Activated CD4-positive, alpha-beta T cell treated with anti-CD3 and anti-CD28 coated beads for 36 hours (primary cell): ENCODE measurements at regions of chr5 and their contacts with region 1.

Region 1: DNA sequence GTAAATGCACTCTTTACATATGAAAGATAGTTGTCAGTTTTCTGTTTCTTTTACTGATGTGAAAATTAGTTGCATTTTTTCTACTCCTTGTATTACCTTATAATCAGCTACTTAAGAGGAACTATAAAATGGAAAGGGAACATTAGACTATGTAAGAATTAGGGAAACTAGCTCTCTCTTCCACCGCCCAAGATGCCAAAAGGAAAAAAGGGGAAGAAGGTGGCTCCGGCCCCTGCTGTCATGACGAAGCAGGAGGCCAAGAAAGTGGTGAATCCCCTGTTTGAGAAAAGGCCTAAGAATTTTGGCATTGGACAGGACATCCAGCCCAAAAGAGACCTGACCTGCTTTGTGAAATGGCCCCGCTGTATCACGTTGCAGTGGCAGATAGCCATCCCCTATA is 15.2 kb upstream of the HOMER1 start:
- DNase-seq: no peak
- ATAC-seq: no peak
- H3K4me3 Mint-ChIP-seq: no peak overlapping the region
- H3K27ac Mint-ChIP-seq: no peak overlapping the region
- H3K4me1 Mint-ChIP-seq: peaks cover 3% of the 10 kb centered on the region
- H3K27me3 Mint-ChIP-seq: peaks cover 5% of the 10 kb centered on the region

Region 2: GRCh38 chr5:79499640-79500273 is 29.4 kb before region 1 on chr5:
- CTCF ChIA-PET with region 1: interaction called, 3 read pairs
- POLR2A ChIA-PET with region 1: no interaction called
- intact Hi-C with region 1: loop called in 1 of 2 experiments (anchors 2 kb)
- DNase-seq: no peak
- ATAC-seq: no peak
- H3K4me3 Mint-ChIP-seq: no peak overlapping the region
- H3K27ac Mint-ChIP-seq: no peak overlapping the region
- H3K4me1 Mint-ChIP-seq: peaks cover 8% of the 10 kb centered on the region
- H3K27me3 Mint-ChIP-seq: no peaks in the 10 kb centered on the region

Region 3: GRCh38 chr5:79547429-79547822 is 18.3 kb after region 1 on chr5:
- CTCF ChIA-PET with region 1: no interaction called
- POLR2A ChIA-PET with region 1: no interaction called
- intact Hi-C with region 1: no loop called
- DNase-seq: no peak
- ATAC-seq: no peak
- H3K4me3 Mint-ChIP-seq: no peak overlapping the region
- H3K27ac Mint-ChIP-seq: no peak overlapping the region
- H3K4me1 Mint-ChIP-seq: no peaks in the 10 kb centered on the region
- H3K27me3 Mint-ChIP-seq: no peaks in the 10 kb centered on the region

Region 4: DNA sequence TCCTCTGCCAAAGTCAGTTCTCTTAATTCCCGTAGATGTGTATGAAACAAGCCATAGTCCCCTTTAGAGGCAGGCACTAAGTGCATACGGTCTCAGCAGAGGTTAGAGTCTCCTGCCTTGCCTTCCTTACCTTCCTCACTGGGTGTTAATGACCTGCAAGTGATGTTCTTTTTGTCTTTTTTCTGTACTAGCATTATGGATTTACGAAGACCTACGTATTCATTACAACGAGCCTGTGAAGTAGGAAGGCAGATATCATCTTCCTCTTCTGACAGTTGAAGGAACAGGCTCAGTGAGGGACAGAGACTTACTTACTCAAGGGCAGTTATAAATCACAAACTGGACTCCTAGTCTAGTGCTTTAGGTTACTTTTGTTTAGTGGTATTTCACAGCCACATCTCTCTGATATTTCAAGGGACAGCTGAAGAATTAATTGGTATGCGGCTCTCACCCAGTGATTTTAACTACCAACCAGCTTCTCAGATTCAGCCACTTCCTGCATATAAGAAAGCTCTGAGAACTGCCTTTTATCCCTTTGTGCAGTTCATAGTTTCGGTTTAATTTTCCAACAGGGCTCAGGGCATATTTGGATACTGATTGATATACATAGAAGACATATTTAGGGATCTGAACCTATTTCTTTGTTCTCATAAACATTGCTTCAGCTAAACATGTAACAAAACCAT is 1618.9 kb after region 1 on chr5:
- CTCF ChIA-PET with region 1: no interaction called
- POLR2A ChIA-PET with region 1: no interaction called
- intact Hi-C with region 1: no loop called
- DNase-seq: no peak
- ATAC-seq: peak; percentile 26
- H3K4me3 Mint-ChIP-seq: peak overlapping the region; percentile 1
- H3K27ac Mint-ChIP-seq: peak overlapping the region; percentile 59
- H3K4me1 Mint-ChIP-seq: peaks cover 15% of the 10 kb centered on the region
- H3K27me3 Mint-ChIP-seq: no peaks in the 10 kb centered on the region